ENCODE measurements at regions of chr6 and their contacts with region 1.

Region 1: DNA sequence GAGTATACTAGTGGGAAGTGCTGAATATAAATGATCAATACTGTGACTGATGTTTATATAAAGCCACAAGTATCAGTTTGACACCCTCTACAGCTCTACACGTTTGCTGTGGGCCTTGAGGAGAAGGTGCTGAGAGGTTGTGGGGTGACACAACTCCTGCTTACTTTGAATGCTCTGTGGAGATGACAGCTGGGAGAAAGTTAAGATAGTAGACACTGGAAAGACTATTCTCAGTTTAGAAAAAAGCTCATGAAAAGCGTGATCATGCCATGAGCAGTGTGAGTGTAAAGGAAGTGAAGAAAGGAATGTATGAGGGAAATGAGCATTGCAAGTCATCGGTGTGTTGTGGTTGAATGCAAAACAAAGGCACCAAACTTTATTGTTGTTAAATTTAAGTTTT is 215.8 kb downstream of the UTRN start:
- DNase-seq: no peak
- H3K4me3 ChIP-seq: no peak overlapping the region
- H3K27ac ChIP-seq: no peak overlapping the region
- H3K4me1 ChIP-seq: no peaks in the 10 kb centered on the region
- H3K27me3 ChIP-seq: no peaks in the 10 kb centered on the region
- CTCF ChIP-seq: no peak

Region 2: GRCh38 chr6:144075187-144075586 is 425.7 kb before region 1 on chr6:
- CTCF ChIA-PET with region 1: no interaction called
- POLR2A ChIA-PET with region 1: interaction called, 11 read pairs
- intact Hi-C with region 1: no loop called
- DNase-seq: no peak
- H3K4me3 ChIP-seq: no peak overlapping the region
- H3K27ac ChIP-seq: no peak overlapping the region
- H3K4me1 ChIP-seq: no peaks in the 10 kb centered on the region
- H3K27me3 ChIP-seq: no peaks in the 10 kb centered on the region
- CTCF ChIP-seq: no peak